Mammary epithelial cell (primary cell): ENCODE measurements at regions of chr19 and their contacts with region 1.

Region 1: GRCh38 chr19:44839276-44839675 is 6.8 kb upstream of the NECTIN2 start:
- DNase-seq: no peak
- H3K4me3 ChIP-seq: no peak overlapping the region
- H3K27ac ChIP-seq: no peak overlapping the region
- H3K4me1 ChIP-seq: no peaks in the 10 kb centered on the region
- H3K27me3 ChIP-seq: no peaks in the 10 kb centered on the region
- CTCF ChIP-seq: no peak

Region 2: GRCh38 chr19:44741841-44742352 is 97.4 kb before region 1 on chr19:
- CTCF ChIA-PET with region 1: no interaction called
- dilution Hi-C with region 1: loop called (anchors 5 kb)
- in situ Hi-C with region 1: no loop called
- intact Hi-C with region 1: no loop called
- DNase-seq: peak; percentile 99
- H3K4me3 ChIP-seq: no peak overlapping the region
- H3K27ac ChIP-seq: peak overlapping the region; percentile 78
- H3K4me1 ChIP-seq: peaks cover 35% of the 10 kb centered on the region
- H3K27me3 ChIP-seq: no peaks in the 10 kb centered on the region
- CTCF ChIP-seq: no peak

Region 3: GRCh38 chr19:44752816-44753618 is 86.3 kb before region 1 on chr19:
- CTCF ChIA-PET with region 1: no interaction called
- dilution Hi-C with region 1: no loop called
- in situ Hi-C with region 1: no loop called
- intact Hi-C with region 1: no loop called
- DNase-seq: peak; percentile 94
- H3K4me3 ChIP-seq: peak overlapping the region in 2 of 3 experiments; percentile 36 to 40
- H3K27ac ChIP-seq: peak overlapping the region; percentile 36
- H3K4me1 ChIP-seq: peaks cover 38% of the 10 kb centered on the region
- H3K27me3 ChIP-seq: no peaks in the 10 kb centered on the region
- CTCF ChIP-seq: no peak

Region 4: DNA sequence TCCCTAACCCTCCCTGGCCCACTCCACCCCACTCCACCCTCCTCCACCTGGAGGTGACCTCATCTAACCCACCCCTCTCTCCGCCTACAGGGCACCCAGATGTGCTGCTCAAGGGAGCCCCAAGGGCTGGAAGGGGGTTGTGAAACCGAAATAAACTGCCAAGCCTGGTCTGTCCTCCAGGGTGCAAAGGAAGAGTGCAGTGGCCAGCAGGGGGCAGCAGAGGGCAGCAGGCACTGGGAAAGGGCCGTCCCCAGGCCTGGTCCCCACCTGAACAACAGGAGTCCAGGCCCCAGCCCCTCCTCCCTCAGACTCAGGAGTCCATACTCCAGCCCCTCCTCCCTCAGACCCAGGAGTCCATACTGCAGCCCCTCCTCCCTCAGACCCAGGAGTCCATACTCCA is 38.8 kb before region 1 on chr19:
- CTCF ChIA-PET with region 1: no interaction called
- dilution Hi-C with region 1: loop called (anchors 5 kb)
- in situ Hi-C with region 1: no loop called
- intact Hi-C with region 1: loop called (anchors 1 kb)
- DNase-seq: peak; percentile 63
- H3K4me3 ChIP-seq: no peak overlapping the region
- H3K27ac ChIP-seq: no peak overlapping the region
- H3K4me1 ChIP-seq: peaks cover 3% of the 10 kb centered on the region
- H3K27me3 ChIP-seq: no peaks in the 10 kb centered on the region
- CTCF ChIP-seq: peak; percentile 98 to 99